Ascending aorta (tissue), 2 donors: ENCODE measurements at regions of chr2 and their contacts with region 1.

Region 1: DNA sequence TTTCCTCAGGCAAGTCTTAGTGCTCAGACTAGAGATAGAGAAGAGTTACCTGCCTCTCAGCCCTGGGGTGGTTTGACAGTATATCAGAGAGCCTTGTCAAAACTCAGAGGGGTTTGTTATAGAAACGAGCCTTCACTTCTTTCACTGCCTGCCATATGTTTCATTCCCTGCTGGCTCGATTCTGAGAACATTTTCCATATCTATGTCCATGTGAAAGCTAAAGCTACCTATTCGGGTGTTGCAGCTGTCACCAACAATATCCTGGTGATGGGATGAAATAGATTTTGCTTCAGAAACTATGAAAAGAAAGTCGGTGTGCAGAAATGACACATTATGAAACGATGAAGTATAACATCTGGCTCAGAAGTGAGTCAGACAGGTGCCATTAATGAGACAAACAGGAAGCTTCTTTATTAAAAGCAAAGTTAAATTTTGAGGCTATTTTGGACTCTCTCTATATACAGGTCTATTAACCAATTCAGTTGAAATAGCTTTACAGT is 56.1 kb upstream of the TANK start:
- DNase-seq: no peak
- H3K4me3 ChIP-seq: no peak overlapping the region
- H3K27ac ChIP-seq: no peak overlapping the region
- H3K4me1 ChIP-seq: peaks cover 0 to 6% of the 10 kb centered on the region in 2 donors
- H3K27me3 ChIP-seq: no peaks in the 10 kb centered on the region
- CTCF ChIP-seq: no peak

Region 2: GRCh38 chr2:161030260-161031063 is 73.6 kb before region 1 on chr2:
- intact Hi-C with region 1: no loop called
- DNase-seq: peak in 1 of 2 donors; percentile 85
- H3K4me3 ChIP-seq: no peak overlapping the region
- H3K27ac ChIP-seq: peak overlapping the region; percentile 21 to 47
- H3K4me1 ChIP-seq: peaks cover 0 to 5% of the 10 kb centered on the region in 2 donors
- H3K27me3 ChIP-seq: no peaks in the 10 kb centered on the region
- CTCF ChIP-seq: no peak

Region 3: GRCh38 chr2:161122772-161123530 is 18.8 kb after region 1 on chr2:
- intact Hi-C with region 1: loop called (anchors 2 kb)
- DNase-seq: peak in 1 of 2 donors; percentile 68
- H3K4me3 ChIP-seq: peak overlapping the region in 1 of 2 donors; percentile 24
- H3K27ac ChIP-seq: peak overlapping the region; percentile 83 to 88
- H3K4me1 ChIP-seq: peaks cover 0 to 13% of the 10 kb centered on the region in 2 donors
- H3K27me3 ChIP-seq: no peaks in the 10 kb centered on the region
- CTCF ChIP-seq: no peak